Mammary epithelial cell (primary cell): ENCODE measurements at regions of chr1 and their contacts with region 1.

Region 1: GRCh38 chr1:43238085-43238484 is 31.7 kb upstream of the TMEM125 start:
- DNase-seq: peak; percentile 28
- H3K4me3 ChIP-seq: no peak overlapping the region
- H3K27ac ChIP-seq: no peak overlapping the region
- H3K4me1 ChIP-seq: peaks cover 7% of the 10 kb centered on the region
- H3K27me3 ChIP-seq: no peaks in the 10 kb centered on the region
- CTCF ChIP-seq: peak; percentile 85 to 93

Region 2: DNA sequence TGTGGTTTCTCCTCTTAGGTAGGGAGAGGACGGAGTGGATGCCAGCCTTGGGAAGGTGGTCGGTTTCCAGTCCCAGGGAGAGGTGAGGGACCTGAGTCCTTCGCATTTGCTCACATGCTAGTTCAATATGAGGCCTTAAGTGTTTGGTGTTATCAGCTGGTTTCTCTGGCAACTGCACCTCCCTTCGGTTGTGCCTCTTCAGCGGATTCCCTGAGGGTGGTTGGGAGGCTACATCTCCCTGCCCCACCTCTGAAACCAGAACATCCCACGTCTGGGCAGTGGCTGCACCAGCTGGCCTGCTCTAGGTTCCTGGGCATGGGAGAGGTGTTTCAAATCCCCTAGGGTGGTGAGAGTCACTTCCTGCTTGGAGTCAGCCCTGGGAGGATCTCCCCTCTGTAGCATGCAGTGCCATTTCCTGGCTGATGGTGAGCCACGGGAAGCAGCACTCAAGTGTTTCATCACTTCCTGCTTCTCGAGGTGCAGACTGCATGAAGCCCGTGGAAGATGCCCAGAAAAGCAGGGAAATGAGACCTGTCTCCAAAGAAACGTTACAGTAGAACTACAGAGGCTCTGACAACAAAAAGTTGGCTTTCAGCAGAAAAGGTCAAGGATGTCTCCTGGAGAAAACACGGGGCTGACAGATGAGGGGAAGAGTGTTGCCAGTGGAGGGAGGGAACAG is 36.2 kb after region 1 on chr1:
- CTCF ChIA-PET with region 1: no interaction called
- dilution Hi-C with region 1: no loop called
- in situ Hi-C with region 1: no loop called
- intact Hi-C with region 1: no loop called
- DNase-seq: peak; percentile 55
- H3K4me3 ChIP-seq: no peak overlapping the region
- H3K27ac ChIP-seq: no peak overlapping the region
- H3K4me1 ChIP-seq: peaks cover 17% of the 10 kb centered on the region
- H3K27me3 ChIP-seq: no peaks in the 10 kb centered on the region
- CTCF ChIP-seq: no peak

Region 3: GRCh38 chr1:43285269-43285990 is 47.3 kb after region 1 on chr1 and contains the start of gene C1orf210:
- CTCF ChIA-PET with region 1: interaction called, 3 read pairs
- dilution Hi-C with region 1: no loop called
- in situ Hi-C with region 1: no loop called
- intact Hi-C with region 1: loop called (anchors 2 kb)
- DNase-seq: peak; percentile 83
- H3K4me3 ChIP-seq: peak within 1 kb of the TSS; percentile 46 to 66 (median 58)
- H3K27ac ChIP-seq: no peak within 1 kb of the TSS
- H3K4me1 ChIP-seq: peaks cover 13% of the 10 kb centered on the region
- H3K27me3 ChIP-seq: no peaks in the 10 kb centered on the region
- CTCF ChIP-seq: peak; percentile 49 to 78
- total RNA-seq, gene C1orf210: 7.0 to 7.2 TPM

Region 4: GRCh38 chr1:43358746-43359693 is 120.9 kb after region 1 on chr1 and contains the start of gene CDC20:
- CTCF ChIA-PET with region 1: no interaction called
- dilution Hi-C with region 1: no loop called
- in situ Hi-C with region 1: loop called in 1 of 2 experiments (anchors 10 kb)
- intact Hi-C with region 1: loop called (anchors 1 kb)
- DNase-seq: peak; percentile 98
- H3K4me3 ChIP-seq: peak within 1 kb of the TSS; percentile 74 to 83 (median 80)
- H3K27ac ChIP-seq: peak within 1 kb of the TSS; percentile 92
- H3K4me1 ChIP-seq: peaks cover 27% of the 10 kb centered on the region
- H3K27me3 ChIP-seq: no peaks in the 10 kb centered on the region
- CTCF ChIP-seq: no peak
- total RNA-seq, gene CDC20: 1.7 to 121 TPM

Region 5: GRCh38 chr1:43383449-43383848 is 145.4 kb after region 1 on chr1:
- CTCF ChIA-PET with region 1: no interaction called
- dilution Hi-C with region 1: no loop called
- in situ Hi-C with region 1: no loop called
- intact Hi-C with region 1: loop called (anchors 1 kb)
- DNase-seq: no peak
- H3K4me3 ChIP-seq: no peak overlapping the region
- H3K27ac ChIP-seq: no peak overlapping the region
- H3K4me1 ChIP-seq: peaks cover 5% of the 10 kb centered on the region
- H3K27me3 ChIP-seq: no peaks in the 10 kb centered on the region
- CTCF ChIP-seq: peak in 1 of 2 donors; percentile 39

Region 6: DNA sequence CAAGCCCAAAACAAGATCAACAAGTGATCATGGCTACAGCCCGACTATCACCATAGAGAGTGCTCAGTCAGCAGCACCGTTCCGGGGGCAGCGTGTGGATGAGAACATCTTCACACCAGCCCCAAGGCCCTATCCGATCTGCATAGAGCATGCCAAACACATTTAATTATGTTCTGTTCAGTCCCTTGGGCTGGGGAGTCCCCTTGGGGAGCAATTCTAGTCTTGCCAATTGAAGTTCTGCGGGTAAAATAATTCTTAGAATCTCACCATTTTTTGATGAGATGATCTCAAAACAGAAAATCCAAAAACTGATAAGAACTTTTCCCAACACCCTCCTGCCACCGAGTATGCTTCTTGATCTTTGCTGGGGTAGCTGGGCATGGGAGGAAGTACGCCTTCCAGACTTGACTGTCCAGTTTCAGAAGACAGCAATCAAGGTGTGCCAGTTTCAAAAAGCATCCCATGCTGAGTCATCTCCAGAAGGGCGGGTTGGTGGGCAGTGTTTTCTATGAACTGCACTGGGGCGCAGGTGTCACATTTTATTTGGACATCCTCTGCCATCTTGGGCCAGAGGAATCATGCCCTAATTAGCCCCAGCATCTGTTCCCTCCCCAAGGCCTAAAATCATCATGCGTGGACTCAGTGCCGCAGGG is 271.8 kb after region 1 on chr1:
- CTCF ChIA-PET with region 1: no interaction called
- dilution Hi-C with region 1: loop called (anchors 5 kb)
- in situ Hi-C with region 1: no loop called
- intact Hi-C with region 1: no loop called
- DNase-seq: peak; percentile 45
- H3K4me3 ChIP-seq: no peak overlapping the region
- H3K27ac ChIP-seq: peak overlapping the region; percentile 22
- H3K4me1 ChIP-seq: peaks cover 23% of the 10 kb centered on the region
- H3K27me3 ChIP-seq: no peaks in the 10 kb centered on the region
- CTCF ChIP-seq: no peak